Dendritic cell treated with granulocyte-macrophage colony-stimulating factor and Interleukin-4, amounts not matched to agents 40 ng/mL and 50 ng/mL, for 4 days (primary cell): ENCODE measurements at regions of chr15 and their contacts with region 1.

Region 1: DNA sequence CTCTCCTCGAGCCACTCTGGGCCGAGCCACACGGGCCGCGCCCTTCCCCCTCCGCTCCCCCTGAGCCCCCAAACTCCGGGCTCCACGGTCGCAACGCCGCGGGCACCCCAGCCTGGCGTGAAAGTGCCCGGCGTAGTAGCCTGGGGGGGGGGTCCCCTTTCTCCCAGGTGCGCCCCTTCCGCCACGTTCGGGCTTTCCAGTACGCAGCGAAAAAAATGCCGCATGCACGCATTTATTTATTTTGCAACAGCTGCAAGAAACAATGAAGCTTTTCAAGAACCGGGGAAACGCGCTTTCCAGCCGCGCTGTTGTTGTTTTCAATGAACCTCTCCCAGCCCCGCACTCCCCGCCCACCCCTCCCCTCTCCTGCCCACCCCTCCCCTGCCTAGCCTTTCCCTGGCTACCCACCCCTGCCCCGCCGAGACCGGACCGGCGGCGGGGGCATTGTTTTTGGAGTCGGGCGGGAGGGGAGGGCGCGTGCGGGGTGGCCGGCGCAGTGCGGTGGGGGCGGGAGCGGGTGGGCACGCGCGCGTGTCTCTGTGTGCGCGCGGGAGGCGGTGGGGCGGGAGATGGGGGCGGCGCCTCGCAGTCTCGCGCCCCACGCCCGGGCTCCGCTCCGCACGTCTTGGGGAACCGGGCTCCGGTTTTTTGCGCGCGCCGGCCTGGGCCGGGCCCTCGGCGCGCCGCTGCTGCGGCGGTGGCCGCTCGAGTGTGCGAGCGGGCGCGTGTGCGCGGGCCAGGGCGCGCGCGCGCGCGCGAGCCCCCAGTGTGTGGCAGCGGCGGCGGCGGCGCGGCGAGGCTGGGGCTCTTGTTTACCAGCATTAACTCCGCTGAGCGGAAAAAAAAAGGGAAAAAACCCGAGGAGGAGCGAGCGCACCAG is at the start of gene IGF1R:
- H3K4me3 Mint-ChIP-seq: peak within 1 kb of the TSS; percentile 93
- H3K27ac Mint-ChIP-seq: peak within 1 kb of the TSS; percentile 89
- H3K4me1 Mint-ChIP-seq: peaks cover 29% of the 10 kb centered on the region
- H3K27me3 Mint-ChIP-seq: peaks cover 55% of the 10 kb centered on the region

Region 2: GRCh38 chr15:98850961-98851573 is 203.1 kb after region 1 on chr15:
- intact Hi-C with region 1: loop called (anchors 1 kb)
- H3K4me3 Mint-ChIP-seq: peak overlapping the region; percentile 91
- H3K27ac Mint-ChIP-seq: peak overlapping the region; percentile 93
- H3K4me1 Mint-ChIP-seq: peaks cover 54% of the 10 kb centered on the region
- H3K27me3 Mint-ChIP-seq: no peaks in the 10 kb centered on the region

Region 3: GRCh38 chr15:99250494-99251435 is 602.8 kb after region 1 on chr15:
- intact Hi-C with region 1: loop called (anchors 5 kb)
- H3K4me3 Mint-ChIP-seq: peak overlapping the region; percentile 85
- H3K27ac Mint-ChIP-seq: peak overlapping the region; percentile 89
- H3K4me1 Mint-ChIP-seq: peaks cover 19% of the 10 kb centered on the region
- H3K27me3 Mint-ChIP-seq: no peaks in the 10 kb centered on the region